Ascending aorta (tissue), 2 donors: ENCODE measurements at regions of chr2 and their contacts with region 1.

Region 1: GRCh38 chr2:219571311-219572236 is at the start of gene OBSL1:
- DNase-seq: peak in 1 of 2 donors; percentile 81
- H3K4me3 ChIP-seq: peak within 1 kb of the TSS; percentile 93 to 94
- H3K27ac ChIP-seq: peak within 1 kb of the TSS; percentile 89 to 90
- H3K4me1 ChIP-seq: peaks cover 0 to 12% of the 10 kb centered on the region in 2 donors
- H3K27me3 ChIP-seq: no peaks in the 10 kb centered on the region
- CTCF ChIP-seq: no peak
- total RNA-seq, gene OBSL1: 151 TPM

Region 2: GRCh38 chr2:219552382-219553167 is 19.0 kb before region 1 on chr2:
- intact Hi-C with region 1: loop called (anchors 2 kb)
- DNase-seq: peak in 1 of 2 donors; percentile 92
- H3K4me3 ChIP-seq: peak overlapping the region; percentile 61 to 79
- H3K27ac ChIP-seq: peak overlapping the region; percentile 40 to 77
- H3K4me1 ChIP-seq: peaks cover 6 to 19% of the 10 kb centered on the region in 2 donors
- H3K27me3 ChIP-seq: no peaks in the 10 kb centered on the region
- CTCF ChIP-seq: no peak